ENCODE measurements at regions of chr4 and their contacts with region 1.

Region 1: DNA sequence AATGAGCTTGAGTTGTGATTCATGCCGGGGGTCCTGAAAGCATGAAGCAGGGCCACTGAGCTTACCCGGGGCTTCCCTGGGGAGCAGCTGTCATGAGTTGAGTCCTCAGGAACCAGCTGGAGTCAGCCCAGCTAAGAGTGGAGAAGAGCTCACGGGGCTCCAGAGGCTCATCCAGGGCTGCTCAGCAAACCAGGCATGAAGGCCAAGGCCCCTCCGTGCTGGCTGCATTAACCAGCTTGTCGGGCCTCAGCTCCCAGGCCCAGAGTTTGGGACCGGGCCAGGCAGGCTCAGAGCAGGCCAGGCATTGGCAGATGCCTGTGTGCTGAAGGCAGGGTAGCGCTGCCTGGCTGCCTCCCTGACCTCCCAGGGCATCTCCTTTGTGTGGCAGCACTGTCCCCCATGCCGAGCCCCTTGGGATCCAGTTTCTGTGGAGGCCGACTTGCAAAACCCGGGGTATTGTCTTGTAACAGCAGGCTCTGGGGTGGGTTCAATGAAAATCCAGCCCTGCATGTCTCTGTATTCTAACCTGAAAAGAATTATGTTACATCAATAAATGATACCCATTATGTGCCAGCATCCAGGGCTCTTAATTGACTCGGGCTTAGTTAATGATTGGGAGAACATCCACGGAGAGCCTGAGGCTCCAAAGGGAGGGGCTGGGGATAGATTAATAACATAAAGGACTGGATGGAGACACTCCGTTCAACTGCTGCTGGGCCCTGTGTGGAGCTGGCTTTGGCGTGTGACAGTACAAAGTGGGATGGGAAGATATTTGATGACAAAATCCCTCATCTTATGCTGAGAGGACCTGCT is 68.0 kb upstream of the MSX1 start:
- DNase-seq: no peak
- H3K4me3 ChIP-seq: no peak overlapping the region
- H3K27ac ChIP-seq: no peak overlapping the region
- H3K4me1 ChIP-seq: no peaks in the 10 kb centered on the region
- H3K27me3 ChIP-seq: no peaks in the 10 kb centered on the region
- CTCF ChIP-seq: no peak

Region 2: GRCh38 chr4:4735870-4736269 is 55.6 kb before region 1 on chr4:
- CTCF ChIA-PET with region 1: no interaction called
- dilution Hi-C with region 1: loop called (anchors 10 kb)
- in situ Hi-C with region 1: no loop called
- intact Hi-C with region 1: no loop called
- DNase-seq: no peak
- H3K4me3 ChIP-seq: no peak overlapping the region
- H3K27ac ChIP-seq: no peak overlapping the region
- H3K4me1 ChIP-seq: no peaks in the 10 kb centered on the region
- H3K27me3 ChIP-seq: no peaks in the 10 kb centered on the region
- CTCF ChIP-seq: no peak

Region 3: GRCh38 chr4:4780729-4781244 is 10.7 kb before region 1 on chr4:
- CTCF ChIA-PET with region 1: no interaction called
- dilution Hi-C with region 1: no loop called
- in situ Hi-C with region 1: no loop called
- intact Hi-C with region 1: no loop called
- DNase-seq: peak; percentile 43
- H3K4me3 ChIP-seq: no peak overlapping the region
- H3K27ac ChIP-seq: no peak overlapping the region
- H3K4me1 ChIP-seq: no peaks in the 10 kb centered on the region
- H3K27me3 ChIP-seq: no peaks in the 10 kb centered on the region
- CTCF ChIP-seq: no peak

Region 4: DNA sequence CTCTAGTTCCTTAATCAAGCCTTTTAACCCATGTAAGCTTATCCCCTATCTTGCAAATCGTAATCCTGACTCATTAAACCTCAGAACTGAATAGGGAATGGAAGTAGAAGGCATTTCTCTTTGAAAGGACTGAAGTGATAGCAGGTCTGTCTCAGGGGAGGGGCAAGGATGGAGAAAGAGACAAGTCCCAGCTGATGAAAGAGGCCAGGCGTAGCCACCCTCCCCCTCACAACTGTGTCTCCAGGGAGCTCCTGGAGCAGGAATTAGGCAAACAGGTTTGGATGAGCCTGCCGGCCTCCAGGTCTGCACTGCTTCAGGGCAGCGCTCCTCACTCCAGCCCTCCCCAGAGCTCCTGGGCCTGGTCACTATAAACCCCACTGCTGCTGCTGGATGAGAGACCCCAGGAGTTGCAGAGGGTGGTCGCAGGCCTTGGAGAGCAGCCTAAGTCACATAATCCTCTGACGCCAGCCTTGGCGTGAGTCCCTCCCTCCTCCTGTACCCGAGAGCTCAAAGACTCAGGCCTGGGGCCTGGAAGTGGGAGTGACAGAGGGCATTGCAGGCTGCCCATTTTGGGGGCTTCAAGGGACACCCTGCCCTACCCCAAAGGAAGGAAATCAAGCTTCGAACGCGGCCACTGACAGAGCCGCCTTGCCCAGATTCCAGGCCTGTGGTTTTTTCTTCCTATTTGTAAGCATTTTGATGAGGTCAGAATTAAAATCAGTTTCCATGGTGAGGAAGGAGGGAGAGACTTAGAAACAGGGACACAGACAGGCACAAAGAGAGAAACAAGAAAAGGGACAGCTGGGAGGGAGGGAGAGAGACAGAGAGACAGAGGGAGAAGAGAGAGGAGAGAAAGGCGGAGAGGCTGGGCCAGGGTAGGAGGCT is 46.8 kb after region 1 on chr4:
- CTCF ChIA-PET with region 1: no interaction called
- dilution Hi-C with region 1: loop called (anchors 5 kb)
- in situ Hi-C with region 1: no loop called
- intact Hi-C with region 1: no loop called
- DNase-seq: peak; percentile 6
- H3K4me3 ChIP-seq: no peak overlapping the region
- H3K27ac ChIP-seq: no peak overlapping the region
- H3K4me1 ChIP-seq: no peaks in the 10 kb centered on the region
- H3K27me3 ChIP-seq: no peaks in the 10 kb centered on the region
- CTCF ChIP-seq: no peak

Measured in mammary epithelial cell (primary cell).